ENCODE measurements at regions of chr12 and their contacts with region 1.

Region 1: DNA sequence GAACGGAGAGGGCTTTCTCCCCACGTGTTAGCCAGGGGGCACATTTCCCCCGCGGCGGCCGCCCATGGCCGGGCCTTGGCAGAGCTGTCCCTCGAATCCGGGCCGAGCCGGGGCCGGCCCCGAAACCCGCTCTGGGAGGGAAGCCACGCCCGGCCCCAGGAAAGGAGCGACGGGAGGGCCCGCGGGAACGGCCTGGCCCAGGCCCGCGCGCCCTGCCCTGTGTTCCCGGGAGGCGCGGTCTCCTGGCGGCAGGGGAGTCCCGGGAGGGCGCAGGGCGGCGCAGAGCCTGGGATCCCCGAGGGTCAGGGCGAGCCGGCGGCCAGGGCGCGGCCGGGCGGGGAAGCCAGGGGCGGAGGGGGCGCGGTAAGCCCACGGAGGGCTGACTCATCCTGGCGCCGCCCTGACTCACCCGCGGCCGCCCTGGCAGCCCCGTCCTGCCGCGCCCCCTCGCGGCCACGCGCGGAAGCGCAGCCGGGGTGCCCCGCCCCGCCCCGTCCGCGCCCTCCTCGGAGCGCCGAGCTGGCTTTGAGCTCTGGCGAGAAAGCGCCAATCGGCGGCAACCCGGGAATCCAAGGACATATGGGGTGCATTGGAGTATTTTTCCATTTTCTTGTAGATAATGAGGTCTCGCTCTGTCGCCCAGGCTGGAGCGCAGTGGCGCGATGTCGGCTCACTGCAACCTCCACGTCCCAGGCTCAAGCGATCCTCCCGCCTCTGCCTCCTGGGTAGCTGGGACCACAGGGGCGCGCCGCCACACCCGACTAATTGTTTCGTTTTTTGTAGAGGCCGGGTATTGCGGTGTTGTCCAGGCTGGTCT is 31.8 kb upstream of the PLEKHG6 start:
- DNase-seq: no peak
- H3K4me3 ChIP-seq: peak overlapping the region; percentile 36
- H3K27me3 ChIP-seq: no peaks in the 10 kb centered on the region
- CTCF ChIP-seq: peak; percentile 29; the same call in 1 of the 2 replicates

Region 2: GRCh38 chr12:6056406-6057240 is 222.0 kb before region 1 on chr12:
- CTCF ChIA-PET with region 1: interaction called, 16 read pairs
- POLR2A ChIA-PET with region 1: no interaction called
- DNase-seq: no peak
- H3K4me3 ChIP-seq: no peak overlapping the region
- H3K27me3 ChIP-seq: no peaks in the 10 kb centered on the region
- CTCF ChIP-seq: peak; percentile 42

Region 3: GRCh38 chr12:6069437-6070107 is 209.1 kb before region 1 on chr12:
- CTCF ChIA-PET with region 1: interaction called, 38 read pairs
- POLR2A ChIA-PET with region 1: no interaction called
- DNase-seq: peak; percentile 89
- H3K4me3 ChIP-seq: no peak overlapping the region
- H3K27me3 ChIP-seq: no peaks in the 10 kb centered on the region; the same call in 1 of the 2 replicates
- CTCF ChIP-seq: no peak

Region 4: GRCh38 chr12:6187948-6188793 is 90.5 kb before region 1 on chr12:
- CTCF ChIA-PET with region 1: interaction called, 109 read pairs
- POLR2A ChIA-PET with region 1: no interaction called
- DNase-seq: no peak
- H3K4me3 ChIP-seq: no peak overlapping the region
- H3K27me3 ChIP-seq: peaks cover 1% of the 10 kb centered on the region; the same call in 1 of the 2 replicates
- CTCF ChIP-seq: no peak

Region 5: DNA sequence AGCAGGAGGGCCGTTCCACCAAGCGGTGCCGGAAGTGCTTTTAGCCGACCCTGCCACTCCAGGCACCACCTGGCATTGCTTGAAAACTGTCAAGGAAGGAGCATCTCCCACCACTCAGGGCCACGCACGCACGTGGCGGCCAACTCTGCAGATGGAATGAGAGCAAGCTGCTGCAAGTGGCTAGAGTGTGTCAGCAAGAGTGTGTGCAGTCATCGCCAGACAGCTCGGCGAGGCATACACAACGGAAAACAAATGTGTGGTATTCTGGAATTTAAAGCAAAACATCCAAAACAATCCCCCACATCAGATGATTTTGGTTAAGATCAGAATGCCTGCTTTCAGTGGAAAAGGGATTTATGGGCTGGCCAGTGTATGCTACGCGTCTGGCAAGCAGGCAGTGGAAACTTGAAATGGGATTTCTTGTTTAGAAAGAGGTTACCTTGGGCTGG is 67.2 kb before region 1 on chr12:
- CTCF ChIA-PET with region 1: interaction called, 56 read pairs
- POLR2A ChIA-PET with region 1: no interaction called
- DNase-seq: peak; percentile 88
- H3K4me3 ChIP-seq: no peak overlapping the region
- H3K27me3 ChIP-seq: no peaks in the 10 kb centered on the region
- CTCF ChIP-seq: no peak

Region 6: GRCh38 chr12:6267139-6267721 is 11.4 kb before region 1 on chr12:
- CTCF ChIA-PET with region 1: interaction called, 22 read pairs
- POLR2A ChIA-PET with region 1: no interaction called
- DNase-seq: peak; percentile 55
- H3K4me3 ChIP-seq: no peak overlapping the region
- H3K27me3 ChIP-seq: peaks cover 4% of the 10 kb centered on the region; the same call in 1 of the 2 replicates
- CTCF ChIP-seq: no peak

Region 7: DNA sequence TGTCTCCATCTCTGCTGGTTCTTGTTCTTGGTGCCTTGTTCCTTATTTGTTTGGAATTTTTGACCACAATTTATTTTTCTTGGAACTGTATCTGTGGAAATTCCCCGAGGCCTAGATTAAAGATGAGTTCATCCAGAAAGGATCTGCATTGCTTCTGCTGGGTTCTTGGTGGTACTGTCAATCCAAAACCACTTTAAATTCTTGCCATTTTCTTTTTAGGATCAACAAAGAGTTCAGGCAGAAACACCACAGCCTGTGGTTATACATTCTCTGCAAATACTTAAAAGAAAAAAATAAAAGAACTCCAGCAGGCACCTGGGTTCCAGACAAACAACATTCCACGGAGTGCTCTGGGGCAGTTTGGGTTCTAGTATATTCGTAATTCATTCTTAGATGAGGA is 197.8 kb after region 1 on chr12:
- CTCF ChIA-PET with region 1: no interaction called
- POLR2A ChIA-PET with region 1: no interaction called
- DNase-seq: peak; percentile 87
- H3K4me3 ChIP-seq: no peak overlapping the region
- H3K27me3 ChIP-seq: no peaks in the 10 kb centered on the region
- CTCF ChIP-seq: no peak